ENCODE measurements at regions of chr2 and their contacts with region 1.

Region 1: GRCh38 chr2:41859615-41860520 is 188.0 kb upstream of the PKDCC start:
- DNase-seq: no peak
- H3K4me3 ChIP-seq: no peak overlapping the region
- H3K27ac ChIP-seq: no peak overlapping the region
- H3K4me1 ChIP-seq: no peaks in the 10 kb centered on the region
- H3K27me3 ChIP-seq: peaks cover 0 to 13% (median 0%) of the 10 kb centered on the region in 7 donors
- CTCF ChIP-seq: no peak
- POLR2A ChIP-seq: no peak

Region 2: GRCh38 chr2:41598161-41598894 is 261.5 kb before region 1 on chr2:
- intact Hi-C with region 1: no loop called
- DNase-seq: no peak
- H3K4me3 ChIP-seq: no peak overlapping the region
- H3K27ac ChIP-seq: peak overlapping the region in 3 of 8 donors; percentile 16 to 47 (median 34)
- H3K4me1 ChIP-seq: no peaks in the 10 kb centered on the region
- H3K27me3 ChIP-seq: no peaks in the 10 kb centered on the region
- CTCF ChIP-seq: no peak
- POLR2A ChIP-seq: no peak

Region 3: DNA sequence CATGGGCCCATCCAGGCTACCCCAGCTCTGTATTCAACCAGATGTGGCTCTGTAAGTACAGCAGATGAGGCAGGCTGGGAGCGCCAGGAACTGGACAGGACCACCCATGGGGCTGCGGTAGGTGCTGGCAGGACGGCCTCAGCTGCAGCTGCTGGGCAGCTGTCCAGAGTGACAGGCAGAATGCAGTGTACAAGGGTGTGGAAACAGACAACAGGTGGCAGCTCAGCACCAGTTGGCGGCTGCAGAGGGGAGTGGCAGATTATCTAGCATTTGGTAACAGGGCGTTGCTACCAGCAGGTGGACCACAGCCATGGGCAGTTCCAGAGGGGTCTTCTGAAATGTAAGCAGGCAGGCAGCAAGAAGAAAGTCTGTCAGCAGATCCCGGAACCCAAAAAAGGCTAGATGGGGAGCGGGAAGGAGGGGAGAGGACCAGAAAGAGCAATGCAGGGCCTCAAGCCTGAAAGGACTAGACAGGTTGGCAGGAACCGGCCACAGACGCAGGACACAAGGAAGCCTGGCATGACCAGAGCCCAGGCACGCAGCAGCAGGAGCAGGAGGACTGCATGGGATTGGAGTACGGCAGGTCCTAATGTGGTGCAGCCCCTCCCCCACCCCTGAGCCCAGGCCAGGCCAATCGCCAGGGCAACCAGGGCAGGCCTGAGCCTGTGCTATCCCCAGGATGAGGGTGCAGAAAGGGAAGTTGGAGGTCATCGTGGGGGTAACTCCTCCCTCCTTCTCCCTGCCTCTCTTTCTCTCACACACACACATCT is 212.7 kb after region 1 on chr2:
- intact Hi-C with region 1: loop called (anchors 5 kb)
- DNase-seq: peak; percentile 67
- H3K4me3 ChIP-seq: no peak overlapping the region
- H3K27ac ChIP-seq: no peak overlapping the region
- H3K4me1 ChIP-seq: peaks cover 0 to 9% (median 0%) of the 10 kb centered on the region in 6 donors
- H3K27me3 ChIP-seq: peaks cover 0 to 24% (median 0%) of the 10 kb centered on the region in 7 donors
- CTCF ChIP-seq: no peak
- POLR2A ChIP-seq: no peak